ENCODE measurements at regions of chr6 and their contacts with region 1.

Region 1: DNA sequence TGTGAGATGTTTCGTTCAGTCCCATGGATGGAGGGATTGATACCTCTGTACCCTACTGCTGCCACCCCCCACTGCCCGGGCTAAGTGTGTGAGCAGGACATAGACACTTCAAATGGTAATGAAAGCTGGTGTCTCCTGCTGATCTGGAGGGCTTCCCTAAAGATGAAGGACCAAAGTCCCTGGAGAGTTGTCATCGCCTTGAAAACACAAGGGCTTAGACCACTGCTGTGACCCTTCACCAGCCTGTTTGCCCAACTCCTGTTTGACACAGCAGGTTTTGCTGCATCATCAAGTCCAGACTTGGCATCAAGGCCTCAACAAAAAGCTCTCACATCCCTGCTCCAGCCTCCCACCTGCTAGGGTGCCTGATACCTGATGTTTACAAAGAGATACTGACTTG is 57.9 kb upstream of the FAM8A1 start:
- DNase-seq: no peak
- H3K4me3 ChIP-seq: no peak overlapping the region
- H3K27ac ChIP-seq: no peak overlapping the region
- H3K27me3 ChIP-seq: no peaks in the 10 kb centered on the region
- CTCF ChIP-seq: no peak

Region 2: GRCh38 chr6:17454316-17455005 is 87.8 kb before region 1 on chr6:
- CTCF ChIA-PET with region 1: no interaction called
- POLR2A ChIA-PET with region 1: no interaction called
- DNase-seq: peak; percentile 57
- H3K4me3 ChIP-seq: no peak overlapping the region
- H3K27ac ChIP-seq: peak overlapping the region; percentile 73
- H3K27me3 ChIP-seq: no peaks in the 10 kb centered on the region
- CTCF ChIP-seq: no peak

Region 3: GRCh38 chr6:18253635-18254034 is 711.4 kb after region 1 on chr6:
- CTCF ChIA-PET with region 1: no interaction called
- POLR2A ChIA-PET with region 1: interaction called, 10 read pairs
- DNase-seq: no peak
- H3K4me3 ChIP-seq: no peak overlapping the region
- H3K27ac ChIP-seq: no peak overlapping the region
- H3K27me3 ChIP-seq: no peaks in the 10 kb centered on the region
- CTCF ChIP-seq: no peak

Measured in AG04450 (cell line).